Esophagus muscularis mucosa (tissue), 4 donors: ENCODE measurements at regions of chr14 and their contacts with region 1.

Region 1: DNA sequence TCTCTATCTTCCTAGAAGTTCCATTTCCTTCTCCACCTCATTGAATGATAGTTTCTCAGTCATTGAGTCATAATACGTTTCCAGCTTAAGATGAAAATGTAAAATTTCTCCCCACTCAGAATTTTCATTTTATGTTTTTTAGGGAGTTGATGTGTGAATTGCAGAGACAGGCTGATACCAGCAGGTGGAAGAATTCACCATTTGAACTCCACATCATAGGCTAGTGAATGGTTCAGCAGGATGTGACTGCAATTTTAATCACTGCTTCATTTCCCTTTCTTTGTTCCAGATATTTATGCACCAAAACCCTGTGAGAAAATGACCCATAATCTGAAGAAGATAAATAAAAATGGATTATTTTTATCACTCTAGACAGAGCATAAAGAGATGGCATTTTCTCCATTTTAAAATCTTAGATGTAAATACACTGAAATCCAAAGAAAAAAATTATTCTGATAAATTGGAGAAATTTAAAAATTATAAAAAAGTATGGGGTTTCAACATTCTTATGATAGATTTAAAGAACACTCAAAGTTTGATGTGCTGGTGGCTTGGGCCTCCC is 10.6 kb upstream of the PYGL start:
- DNase-seq: no peak
- H3K4me3 ChIP-seq: no peak overlapping the region
- H3K27ac ChIP-seq: peak overlapping the region in 1 of 4 donors; percentile 69
- H3K4me1 ChIP-seq: peaks cover 0 to 13% (median 9%) of the 10 kb centered on the region in 4 donors
- H3K27me3 ChIP-seq: no peaks in the 10 kb centered on the region
- CTCF ChIP-seq: peak; percentile 64 to 72 (median 71)
- EP300 ChIP-seq: no peak
- POLR2A ChIP-seq: no peak

Region 2: GRCh38 chr14:51069055-51069664 is 114.3 kb after region 1 on chr14:
- intact Hi-C with region 1: no loop called
- DNase-seq: no peak
- H3K4me3 ChIP-seq: no peak overlapping the region
- H3K27ac ChIP-seq: no peak overlapping the region
- H3K4me1 ChIP-seq: peaks cover 0 to 17% (median 4%) of the 10 kb centered on the region in 4 donors
- H3K27me3 ChIP-seq: no peaks in the 10 kb centered on the region
- CTCF ChIP-seq: no peak
- EP300 ChIP-seq: no peak
- POLR2A ChIP-seq: no peak

Region 3: DNA sequence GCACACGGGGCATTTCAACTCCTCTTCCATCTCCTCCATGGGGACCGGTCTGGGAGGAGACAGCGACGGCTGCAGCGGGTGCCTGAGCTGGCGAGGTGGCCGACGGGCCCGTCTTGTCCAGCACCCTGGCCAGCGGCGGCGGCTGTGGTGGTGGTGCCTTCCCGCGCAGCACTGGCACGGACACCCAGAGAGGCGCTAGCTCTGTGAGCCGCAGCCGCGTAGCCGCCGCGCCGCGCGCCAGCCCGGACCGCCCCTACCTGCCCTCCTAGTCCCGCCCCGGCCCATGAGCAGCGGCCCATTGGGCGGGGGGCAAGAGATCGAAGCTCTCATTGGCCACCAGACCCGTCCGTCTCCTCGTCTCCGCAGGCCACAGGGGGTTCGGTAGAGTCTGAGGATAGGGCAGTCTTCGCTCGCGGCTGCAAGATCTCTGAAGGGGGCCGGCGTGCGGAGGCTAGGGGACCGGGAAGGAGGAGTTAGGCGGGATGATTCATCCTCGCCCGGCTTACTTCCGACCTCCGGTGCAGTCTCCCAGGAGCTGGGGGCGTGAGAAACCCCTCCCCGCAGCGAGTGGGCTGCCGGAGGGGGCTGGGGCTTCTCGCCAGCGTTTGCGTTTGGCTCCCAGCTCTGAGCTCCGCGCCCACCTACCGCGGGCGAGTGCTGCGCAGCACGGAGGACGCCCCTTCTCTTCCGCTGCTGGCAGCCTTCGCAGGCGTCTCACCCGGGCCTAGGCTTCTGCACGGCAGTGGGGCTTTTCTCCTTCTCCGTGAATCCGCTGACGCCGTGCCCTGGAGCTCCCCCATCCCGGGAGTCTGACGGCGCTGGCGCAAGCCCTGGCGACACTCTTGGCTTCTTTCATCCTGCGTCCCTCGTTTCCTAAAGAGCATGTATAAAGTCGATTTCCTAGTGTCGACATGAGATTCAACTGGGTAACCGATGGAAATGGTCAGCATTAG is 140.3 kb after region 1 on chr14 and contains the start of gene TRIM9:
- intact Hi-C with region 1: loop called (anchors 10 kb)
- DNase-seq: peak; percentile 96
- H3K4me3 ChIP-seq: peak within 1 kb of the TSS; percentile 58 to 82 (median 69)
- H3K27ac ChIP-seq: peak within 1 kb of the TSS; percentile 55 to 77 (median 62)
- H3K4me1 ChIP-seq: peaks cover 26 to 42% (median 33%) of the 10 kb centered on the region in 4 donors
- H3K27me3 ChIP-seq: peaks cover 16 to 42% (median 22%) of the 10 kb centered on the region in 4 donors
- CTCF ChIP-seq: no peak
- EP300 ChIP-seq: no peak
- POLR2A ChIP-seq: no peak
- total RNA-seq, gene TRIM9: 0.58 to 1.7 (median 0.76) TPM

Region 4: DNA sequence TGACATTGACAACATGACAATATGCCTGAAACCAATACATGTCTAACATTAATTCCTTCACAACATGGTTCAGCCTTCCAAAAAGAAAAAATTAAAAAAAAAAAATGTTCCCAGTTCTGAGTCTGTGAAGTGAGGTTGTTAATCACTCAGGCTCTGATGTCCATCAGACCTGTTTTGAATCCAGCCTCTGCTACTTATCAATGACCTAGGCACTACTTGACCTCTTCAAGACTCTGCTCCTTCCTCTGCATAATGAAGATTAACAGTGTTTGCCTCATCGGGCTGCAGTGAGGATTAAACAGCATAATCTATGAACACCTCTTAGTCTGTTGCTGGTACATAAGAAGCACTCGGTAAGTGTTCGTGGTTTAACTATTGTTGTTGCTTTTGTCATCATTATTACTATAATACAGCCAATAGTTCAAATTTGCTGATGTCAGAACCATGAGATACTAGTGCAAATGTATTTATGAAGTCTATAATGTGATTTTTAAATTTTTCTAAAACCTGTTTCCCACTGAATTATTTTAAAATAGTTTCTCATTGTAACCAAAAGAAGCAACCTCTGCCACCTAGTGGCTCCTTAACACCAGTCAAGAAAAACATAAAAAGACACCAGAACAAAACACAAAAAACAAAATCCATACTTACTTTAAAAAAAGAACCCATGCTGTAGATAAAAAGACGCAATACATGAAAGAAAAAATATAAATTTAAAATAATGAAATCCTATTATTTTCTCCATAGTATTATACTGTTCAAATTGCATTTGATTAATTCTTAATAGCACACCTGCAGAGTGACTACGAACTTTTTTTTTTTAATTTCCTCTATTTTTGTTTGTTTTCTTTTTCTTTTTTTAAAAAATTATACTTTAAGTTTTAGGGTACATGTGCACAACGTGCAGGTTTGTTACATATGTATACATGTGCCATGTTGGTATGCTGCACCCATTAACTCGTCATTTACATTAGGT is 264.9 kb after region 1 on chr14:
- intact Hi-C with region 1: loop called (anchors 2 kb)
- DNase-seq: no peak
- H3K4me3 ChIP-seq: no peak overlapping the region
- H3K27ac ChIP-seq: no peak overlapping the region
- H3K4me1 ChIP-seq: no peaks in the 10 kb centered on the region
- H3K27me3 ChIP-seq: no peaks in the 10 kb centered on the region
- CTCF ChIP-seq: peak; percentile 56 to 63 (median 62)
- EP300 ChIP-seq: no peak
- POLR2A ChIP-seq: no peak

Region 5: DNA sequence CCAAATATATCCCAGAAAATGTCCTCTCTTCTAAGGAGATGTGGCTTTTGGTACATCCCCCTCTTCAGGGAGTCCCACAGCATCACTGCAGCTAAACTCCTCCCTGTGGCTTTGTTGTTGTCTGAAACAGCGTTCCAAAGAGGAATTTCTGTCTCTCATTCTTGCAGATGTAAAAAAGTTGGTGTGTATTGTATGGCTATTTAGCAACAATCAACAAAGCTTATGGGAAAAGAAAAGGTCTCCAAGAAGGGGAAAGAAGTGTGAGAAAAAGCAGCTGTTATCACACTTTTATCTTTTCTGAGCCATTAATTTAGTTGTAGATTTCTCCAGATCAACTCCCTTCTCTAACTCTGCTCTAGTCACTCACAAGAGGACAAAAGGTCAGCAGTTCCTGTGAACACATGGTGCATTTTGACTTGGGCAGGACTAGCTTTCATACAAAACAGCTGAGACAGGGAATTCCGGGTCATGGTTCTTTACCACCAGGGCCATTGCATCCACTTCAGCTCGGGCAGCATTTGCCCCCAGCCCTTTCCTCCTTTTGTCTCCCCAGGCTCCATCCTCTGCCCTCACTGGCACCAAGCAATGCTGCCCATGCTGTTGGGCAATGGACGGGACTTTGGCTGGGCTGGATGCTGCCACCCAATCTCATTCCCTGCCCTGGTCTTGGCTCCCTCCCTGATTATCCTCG is 469.8 kb after region 1 on chr14:
- intact Hi-C with region 1: no loop called
- DNase-seq: no peak
- H3K4me3 ChIP-seq: no peak overlapping the region
- H3K27ac ChIP-seq: peak overlapping the region; percentile 32 to 68 (median 48)
- H3K4me1 ChIP-seq: peaks cover 4 to 13% (median 7%) of the 10 kb centered on the region in 4 donors
- H3K27me3 ChIP-seq: no peaks in the 10 kb centered on the region
- CTCF ChIP-seq: no peak
- EP300 ChIP-seq: no peak
- POLR2A ChIP-seq: no peak